ENCODE measurements at regions of chr10 and their contacts with region 1.

Region 1: GRCh38 chr10:6050801-6051445 is 11.2 kb downstream of the IL2RA start:
- DNase-seq: peak; percentile 55 to 69
- ATAC-seq: peak in 7 of 8 donors; percentile 68 to 75 (median 71)
- H3K4me3 ChIP-seq: peak overlapping the region in 9 of 10 donors; percentile 5 to 59 (median 39)
- H3K27ac ChIP-seq: peak overlapping the region; percentile 37 to 89 (median 76)
- H3K4me1 ChIP-seq: peaks cover 0 to 52% (median 37%) of the 10 kb centered on the region in 9 donors
- H3K27me3 ChIP-seq: no peaks in the 10 kb centered on the region
- CTCF ChIP-seq: peak; percentile 10 to 64 (median 37)

Region 2: GRCh38 chr10:6014241-6014761 is 36.6 kb before region 1 on chr10:
- intact Hi-C with region 1: loop called in 2 of 10 experiments (anchors 2 to 5 kb)
- DNase-seq: peak in 1 of 2 donors; percentile 75
- ATAC-seq: peak in 7 of 8 donors; percentile 23 to 63 (median 55)
- H3K4me3 ChIP-seq: peak overlapping the region in 1 of 10 donors; percentile 33
- H3K27ac ChIP-seq: peak overlapping the region in 2 of 10 donors; percentile 11 to 48
- H3K4me1 ChIP-seq: peaks cover 0 to 21% (median 8%) of the 10 kb centered on the region in 9 donors
- H3K27me3 ChIP-seq: no peaks in the 10 kb centered on the region
- CTCF ChIP-seq: peak; percentile 52 to 88 (median 79)